Psoas muscle (tissue), 8 donors: ENCODE measurements at regions of chr17 and their contacts with region 1.

Region 1: DNA sequence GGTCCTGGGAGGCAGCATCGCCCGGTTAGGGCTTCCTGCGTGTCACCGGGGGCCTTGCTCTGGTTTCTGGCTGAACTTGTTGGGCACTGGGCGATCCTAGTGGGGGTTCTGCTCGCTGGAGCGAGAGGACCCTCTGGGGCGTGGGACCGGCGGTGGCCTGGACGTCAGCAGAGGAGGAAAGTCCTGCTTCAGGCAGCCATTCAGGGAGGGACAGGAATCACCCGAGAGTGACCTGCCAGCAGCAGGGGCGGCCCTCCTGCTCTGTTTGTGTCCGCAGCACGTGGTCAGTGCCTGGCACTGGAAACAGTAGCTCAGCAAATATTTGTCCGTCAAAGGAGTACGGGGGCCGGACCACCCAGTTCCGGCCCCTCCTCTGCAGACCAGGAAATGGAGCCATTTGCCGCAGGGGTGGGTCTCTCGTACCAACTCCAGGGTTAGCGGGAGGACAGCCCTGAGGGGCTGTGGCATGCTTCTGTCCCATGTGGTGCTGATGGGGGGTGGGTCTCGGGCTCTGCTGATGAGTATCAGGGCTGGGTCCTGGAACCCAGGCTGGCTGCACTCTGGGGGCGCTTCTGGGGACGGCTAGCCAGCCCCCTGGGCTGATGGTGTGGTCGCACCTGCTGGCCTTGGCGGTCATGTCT is 48.3 kb downstream of the BAIAP2 start:
- DNase-seq: no peak
- ATAC-seq: no peak
- H3K4me3 ChIP-seq: no peak overlapping the region
- H3K27ac ChIP-seq: peak overlapping the region; percentile 60
- H3K4me1 ChIP-seq: peaks cover 34% of the 10 kb centered on the region
- H3K27me3 ChIP-seq: no peaks in the 10 kb centered on the region
- CTCF ChIP-seq: no peak

Region 2: GRCh38 chr17:81018044-81018802 is 65.0 kb before region 1 on chr17:
- intact Hi-C with region 1: no loop called
- DNase-seq: peak; percentile 21 to 50
- ATAC-seq: peak in 3 of 4 donors; percentile 30 to 63 (median 52)
- H3K4me3 ChIP-seq: peak overlapping the region; percentile 50
- H3K27ac ChIP-seq: peak overlapping the region; percentile 76
- H3K4me1 ChIP-seq: peaks cover 41% of the 10 kb centered on the region
- H3K27me3 ChIP-seq: no peaks in the 10 kb centered on the region
- CTCF ChIP-seq: no peak

Region 3: GRCh38 chr17:81034779-81035388 is 48.4 kb before region 1 on chr17 and contains the start of gene BAIAP2:
- intact Hi-C with region 1: loop called (anchors 5 kb)
- DNase-seq: peak; percentile 97 to 99
- ATAC-seq: peak; percentile 85 to 89 (median 86)
- H3K4me3 ChIP-seq: peak within 1 kb of the TSS; percentile 70
- H3K27ac ChIP-seq: peak within 1 kb of the TSS; percentile 32
- H3K4me1 ChIP-seq: peaks cover 25% of the 10 kb centered on the region
- H3K27me3 ChIP-seq: peaks cover 0 to 8% (median 0%) of the 10 kb centered on the region in 3 donors
- CTCF ChIP-seq: no peak
- total RNA-seq, gene BAIAP2: 4.7 to 28.9 (median 10.0) TPM